ENCODE measurements at regions of chr3 and their contacts with region 1.

Region 1: DNA sequence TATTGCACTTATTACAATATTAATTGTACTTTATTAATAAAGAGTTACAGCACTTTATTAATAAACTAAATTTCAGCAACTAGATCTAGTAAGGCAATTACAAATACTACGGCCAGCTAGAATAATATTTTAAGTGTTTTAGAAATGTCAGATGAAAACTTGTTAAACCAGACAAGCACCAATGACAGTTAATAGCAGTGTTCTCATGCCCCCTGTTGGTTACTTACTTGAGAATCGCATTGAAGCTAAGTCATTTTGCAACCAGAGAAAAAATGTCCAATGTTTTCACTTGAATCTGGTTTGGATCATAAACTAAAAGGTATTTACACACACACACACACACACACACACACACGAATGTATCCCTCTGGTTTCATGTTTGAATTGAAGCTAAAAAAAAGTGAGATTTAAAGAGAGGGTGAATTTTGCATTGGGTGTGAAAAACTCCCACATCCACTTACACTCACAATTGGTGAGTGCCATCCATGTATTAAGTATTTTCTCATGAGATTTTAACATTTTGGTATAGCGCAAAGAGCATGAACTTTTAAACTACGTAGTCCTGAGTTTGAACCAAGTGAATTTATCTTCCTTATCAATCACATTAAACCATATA is 347.7 kb downstream of the ZBBX start:
- DNase-seq: peak; percentile 56
- H3K4me3 Mint-ChIP-seq: no peak overlapping the region
- H3K27ac Mint-ChIP-seq: no peak overlapping the region
- H3K4me1 Mint-ChIP-seq: peaks cover 14% of the 10 kb centered on the region
- H3K27me3 Mint-ChIP-seq: no peaks in the 10 kb centered on the region
- CTCF ChIP-seq: peak; percentile 57

Region 2: DNA sequence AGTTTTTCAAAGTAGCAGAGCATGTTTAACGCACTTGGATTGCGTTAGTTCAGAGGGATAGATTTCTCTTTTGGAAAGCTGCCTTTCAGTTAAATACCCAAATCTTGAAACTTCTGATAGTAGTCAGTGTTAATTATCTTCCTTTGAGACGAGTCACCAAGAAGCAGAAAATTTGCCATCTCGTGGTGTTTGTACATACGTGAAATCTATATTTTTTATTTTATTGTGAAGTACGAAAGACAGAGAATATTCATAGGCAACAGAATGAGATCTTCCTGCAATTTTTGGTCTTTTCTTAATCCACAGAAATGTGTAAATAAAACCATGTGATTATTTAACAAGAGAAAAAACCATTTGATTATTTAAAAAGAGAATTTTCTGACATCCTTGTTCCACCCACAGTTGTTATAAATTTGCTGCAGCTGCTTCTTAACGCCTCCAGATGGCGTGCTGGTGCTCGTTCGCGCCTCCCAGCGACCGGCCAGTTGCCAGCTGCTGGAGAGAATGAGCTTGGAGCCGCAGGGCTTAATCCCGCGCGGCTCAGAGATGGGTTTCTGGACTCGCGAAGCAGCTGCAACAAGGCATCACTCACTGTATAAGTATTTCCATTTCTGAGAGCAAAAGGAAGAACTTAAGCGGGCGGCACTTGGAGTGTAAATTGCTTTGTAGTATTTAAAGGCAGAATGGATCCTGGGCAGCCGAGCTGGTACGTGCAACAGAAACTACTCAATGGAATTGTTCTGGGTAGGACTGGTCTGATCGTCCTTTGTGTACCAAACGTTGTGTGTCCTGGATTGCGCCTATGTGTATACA is 1825.7 kb before region 1 on chr3:
- CTCF ChIA-PET with region 1: interaction called, 3 read pairs
- intact Hi-C with region 1: loop called (anchors 5 kb)
- DNase-seq: peak; percentile 82
- H3K4me3 Mint-ChIP-seq: peak overlapping the region; percentile 80
- H3K27ac Mint-ChIP-seq: no peak overlapping the region
- H3K4me1 Mint-ChIP-seq: no peaks in the 10 kb centered on the region
- H3K27me3 Mint-ChIP-seq: no peaks in the 10 kb centered on the region
- CTCF ChIP-seq: peak; percentile 91

Region 3: GRCh38 chr3:165339753-165340152 is 1692.6 kb before region 1 on chr3:
- CTCF ChIA-PET with region 1: no interaction called
- intact Hi-C with region 1: loop called (anchors 5 kb)
- DNase-seq: peak; percentile 14
- H3K4me3 Mint-ChIP-seq: no peak overlapping the region
- H3K27ac Mint-ChIP-seq: no peak overlapping the region
- H3K4me1 Mint-ChIP-seq: no peaks in the 10 kb centered on the region
- H3K27me3 Mint-ChIP-seq: no peaks in the 10 kb centered on the region
- CTCF ChIP-seq: peak; percentile 36

Region 4: GRCh38 chr3:166013073-166013679 is 1019.2 kb before region 1 on chr3:
- CTCF ChIA-PET with region 1: interaction called, 4 read pairs
- intact Hi-C with region 1: loop called (anchors 1 kb)
- DNase-seq: peak; percentile 64
- H3K4me3 Mint-ChIP-seq: no peak overlapping the region
- H3K27ac Mint-ChIP-seq: no peak overlapping the region
- H3K4me1 Mint-ChIP-seq: no peaks in the 10 kb centered on the region
- H3K27me3 Mint-ChIP-seq: no peaks in the 10 kb centered on the region
- CTCF ChIP-seq: peak; percentile 60

Region 5: DNA sequence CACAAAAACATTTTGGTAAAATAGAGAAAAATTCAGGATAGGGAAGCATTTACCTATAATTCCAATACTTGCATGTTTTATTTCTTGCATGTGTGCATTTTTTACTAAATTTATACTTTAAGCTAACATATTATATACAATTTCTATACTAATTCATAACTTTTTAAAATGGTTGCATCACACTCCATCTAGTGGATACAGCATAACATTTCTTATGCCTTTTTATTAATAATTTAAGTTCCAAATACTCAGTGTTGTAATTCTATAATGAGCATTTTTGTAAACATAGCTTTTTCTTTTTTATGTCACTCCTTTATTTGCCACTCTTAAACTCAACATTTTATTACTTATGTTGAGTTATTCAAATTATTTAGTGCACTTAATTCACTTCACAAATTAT is 130.0 kb before region 1 on chr3:
- CTCF ChIA-PET with region 1: no interaction called
- intact Hi-C with region 1: loop called (anchors 5 kb)
- DNase-seq: no peak
- H3K4me3 Mint-ChIP-seq: no peak overlapping the region
- H3K27ac Mint-ChIP-seq: no peak overlapping the region
- H3K4me1 Mint-ChIP-seq: no peaks in the 10 kb centered on the region
- H3K27me3 Mint-ChIP-seq: no peaks in the 10 kb centered on the region
- CTCF ChIP-seq: no peak

Measured in Calu3 (cell line).